Activated B cell treated with CpG ODN at 0.5 μM for 24 hours (primary cell): ENCODE measurements at regions of chr11 and their contacts with region 1.

Region 1: DNA sequence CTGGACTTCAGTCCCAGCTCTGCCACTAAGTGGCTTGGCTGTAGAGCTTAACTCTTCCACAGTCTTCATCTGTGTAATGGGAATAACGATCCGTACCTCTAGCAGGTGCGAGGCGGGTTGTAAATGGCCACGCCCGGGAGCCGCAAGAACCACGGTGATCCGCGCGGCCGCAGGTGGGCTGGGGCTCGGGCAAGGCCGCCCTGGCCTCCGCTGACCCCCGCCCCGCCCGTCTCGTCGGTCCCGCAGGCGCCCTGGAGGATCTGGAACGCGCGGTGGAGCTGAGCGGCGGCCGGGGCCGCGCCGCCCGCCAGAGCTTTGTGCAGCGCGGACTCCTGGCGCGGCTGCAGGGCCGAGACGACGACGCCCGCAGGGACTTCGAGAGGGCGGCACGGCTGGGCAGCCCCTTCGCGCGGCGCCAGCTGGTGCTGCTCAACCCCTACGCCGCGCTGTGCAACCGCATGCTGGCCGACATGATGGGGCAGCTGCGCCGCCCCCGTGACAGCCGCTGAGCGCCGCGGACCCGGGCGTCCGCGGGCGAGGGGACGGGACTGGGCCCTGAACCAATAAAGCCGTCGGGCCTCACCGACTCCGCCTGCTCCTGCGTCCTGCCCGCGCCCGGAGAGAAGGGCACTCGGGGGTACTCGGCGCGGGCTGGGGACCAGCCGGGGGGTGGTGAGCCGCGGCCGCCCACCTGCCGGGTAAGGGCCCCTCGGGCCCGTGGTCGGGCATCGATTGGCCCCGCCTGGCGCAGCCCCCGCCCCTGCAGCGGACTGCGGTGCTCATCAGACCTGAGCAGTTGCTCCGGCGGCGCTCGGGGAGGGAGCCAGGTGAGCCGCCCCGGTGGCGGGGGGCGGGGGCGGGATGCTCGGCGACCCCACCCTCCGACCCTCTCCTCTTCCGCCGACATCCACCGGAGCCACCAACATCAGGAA is at the start of gene TMEM25:
- DNase-seq: peak; percentile 71
- ATAC-seq: peak; percentile 90
- H3K4me3 Mint-ChIP-seq: peak within 1 kb of the TSS; percentile 89
- H3K27ac Mint-ChIP-seq: peak within 1 kb of the TSS; percentile 35
- H3K4me1 Mint-ChIP-seq: peaks cover 18% of the 10 kb centered on the region
- H3K27me3 Mint-ChIP-seq: no peaks in the 10 kb centered on the region
- CTCF ChIP-seq: no peak
- total RNA-seq, gene TMEM25: 9.4 and 12.5 TPM in 2 replicates

Region 2: DNA sequence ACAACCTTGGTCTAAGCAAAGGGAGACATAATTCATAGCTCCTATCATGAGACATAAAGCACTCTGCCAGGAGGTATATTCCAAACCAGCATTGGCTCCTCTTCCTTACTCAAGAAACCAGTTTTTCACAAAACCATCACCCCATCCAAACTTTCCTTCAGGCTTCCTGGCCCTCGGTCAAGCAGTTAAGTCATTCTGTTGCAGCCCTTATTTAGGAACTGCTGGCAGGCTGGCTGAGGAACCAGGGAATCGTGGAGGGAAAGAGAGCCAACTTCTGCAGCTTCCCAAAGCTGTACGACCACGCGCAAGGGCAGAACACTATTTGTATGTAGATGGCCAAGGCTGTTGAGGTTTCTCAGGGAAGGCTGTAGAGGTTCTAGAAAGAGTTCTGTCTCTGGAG is 34.4 kb after region 1 on chr11:
- CTCF ChIA-PET with region 1: no interaction called
- POLR2A ChIA-PET with region 1: no interaction called
- intact Hi-C with region 1: loop called (anchors 1 kb)
- DNase-seq: no peak
- ATAC-seq: no peak
- H3K4me3 Mint-ChIP-seq: peak overlapping the region; percentile 68
- H3K27ac Mint-ChIP-seq: peak overlapping the region; percentile 20
- H3K4me1 Mint-ChIP-seq: peaks cover 10% of the 10 kb centered on the region
- H3K27me3 Mint-ChIP-seq: no peaks in the 10 kb centered on the region
- CTCF ChIP-seq: no peak